Activated CD8-positive, alpha-beta T cell treated with anti-CD3 and anti-CD28 coated beads for 36 hours (primary cell): ENCODE measurements at regions of chr2 and their contacts with region 1.

Region 1: GRCh38 chr2:204072443-204073324 is 136.1 kb downstream of the ICOS start:
- DNase-seq: peak; percentile 82
- ATAC-seq: peak; percentile 79
- H3K4me3 Mint-ChIP-seq: no peak overlapping the region
- H3K27ac Mint-ChIP-seq: no peak overlapping the region
- H3K4me1 Mint-ChIP-seq: peaks cover 2% of the 10 kb centered on the region
- H3K27me3 Mint-ChIP-seq: peaks cover 7% of the 10 kb centered on the region
- CTCF ChIP-seq: peak; percentile 93

Region 2: GRCh38 chr2:204051476-204051875 is 21.2 kb before region 1 on chr2:
- CTCF ChIA-PET with region 1: interaction called, 20 read pairs
- POLR2A ChIA-PET with region 1: interaction called, 3 read pairs
- intact Hi-C with region 1: no loop called
- DNase-seq: no peak
- ATAC-seq: peak; percentile 50
- H3K4me3 Mint-ChIP-seq: no peak overlapping the region
- H3K27ac Mint-ChIP-seq: no peak overlapping the region
- H3K4me1 Mint-ChIP-seq: peaks cover 16% of the 10 kb centered on the region
- H3K27me3 Mint-ChIP-seq: no peaks in the 10 kb centered on the region
- CTCF ChIP-seq: peak; percentile 44

Region 3: GRCh38 chr2:204108330-204108751 is 35.7 kb after region 1 on chr2:
- CTCF ChIA-PET with region 1: interaction called, 21 read pairs
- POLR2A ChIA-PET with region 1: no interaction called
- intact Hi-C with region 1: no loop called
- DNase-seq: peak; percentile 73
- ATAC-seq: peak; percentile 49
- H3K4me3 Mint-ChIP-seq: peak overlapping the region; percentile 62
- H3K27ac Mint-ChIP-seq: peak overlapping the region; percentile 92
- H3K4me1 Mint-ChIP-seq: peaks cover 78% of the 10 kb centered on the region
- H3K27me3 Mint-ChIP-seq: peaks cover 4% of the 10 kb centered on the region
- CTCF ChIP-seq: peak; percentile 89

Region 4: DNA sequence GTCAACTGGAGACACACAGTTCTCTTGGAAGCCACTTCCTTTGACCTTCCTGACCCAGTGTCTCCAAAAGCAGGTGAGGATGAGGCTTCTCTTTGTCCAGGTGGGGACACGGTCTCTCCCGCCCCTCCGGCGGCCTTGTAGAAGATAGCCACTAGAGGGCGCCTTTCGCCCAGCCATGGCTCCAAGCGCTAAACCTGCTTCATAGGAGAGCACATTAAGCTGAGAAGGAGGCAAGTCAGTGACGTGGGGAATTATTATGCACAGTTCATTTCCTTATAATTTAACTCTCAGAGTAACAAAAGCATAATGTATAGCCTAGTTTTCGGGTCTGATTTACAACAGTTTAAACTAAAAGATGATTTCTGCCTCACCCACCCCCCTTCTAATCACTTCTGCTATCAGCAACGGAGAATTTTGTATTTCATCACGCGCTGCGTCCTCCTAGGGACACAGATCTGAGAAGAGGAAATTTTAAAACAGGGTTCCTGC is 72.6 kb after region 1 on chr2:
- CTCF ChIA-PET with region 1: interaction called, 25 read pairs
- POLR2A ChIA-PET with region 1: no interaction called
- intact Hi-C with region 1: no loop called
- DNase-seq: peak; percentile 88
- ATAC-seq: peak; percentile 98
- H3K4me3 Mint-ChIP-seq: peak overlapping the region; percentile 70
- H3K27ac Mint-ChIP-seq: peak overlapping the region; percentile 58
- H3K4me1 Mint-ChIP-seq: peaks cover 5% of the 10 kb centered on the region
- H3K27me3 Mint-ChIP-seq: peaks cover 26% of the 10 kb centered on the region
- CTCF ChIP-seq: peak; percentile 90